ENCODE measurements at regions of chr17 and their contacts with region 1.

Region 1: DNA sequence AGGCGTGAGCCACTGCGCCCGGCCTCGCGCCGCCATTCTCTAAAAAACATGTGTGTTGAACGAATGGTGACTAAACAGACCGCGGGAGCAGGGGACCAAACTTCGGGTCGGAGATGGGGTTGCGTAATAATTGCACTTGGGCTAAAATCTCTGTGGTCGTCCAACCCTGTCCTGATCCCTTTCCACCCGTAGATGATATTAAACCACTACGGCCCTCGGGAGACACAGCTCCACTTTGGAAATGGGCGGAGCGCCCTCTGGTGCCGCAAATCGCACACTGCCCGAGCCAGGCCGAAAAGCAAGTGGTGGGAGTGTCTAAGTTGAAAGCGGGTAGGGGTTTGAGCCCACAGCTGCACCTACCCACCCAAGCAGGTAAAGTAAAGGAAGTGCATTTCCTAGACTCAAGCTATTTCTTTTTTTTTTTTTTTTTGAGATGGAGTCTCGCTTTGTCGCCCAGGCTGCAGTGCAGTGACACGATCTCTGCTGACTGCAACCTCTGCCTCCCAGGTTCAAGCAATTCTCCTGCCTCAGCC is 17.0 kb downstream of the CAVIN1 start:
- DNase-seq: peak; percentile 90
- ATAC-seq: peak; percentile 80
- H3K4me3 ChIP-seq: no peak overlapping the region
- H3K27ac ChIP-seq: peak overlapping the region; percentile 79
- H3K4me1 ChIP-seq: peaks cover 64% of the 10 kb centered on the region
- H3K27me3 ChIP-seq: no peaks in the 10 kb centered on the region
- CTCF ChIP-seq: peak; percentile 83

Region 2: DNA sequence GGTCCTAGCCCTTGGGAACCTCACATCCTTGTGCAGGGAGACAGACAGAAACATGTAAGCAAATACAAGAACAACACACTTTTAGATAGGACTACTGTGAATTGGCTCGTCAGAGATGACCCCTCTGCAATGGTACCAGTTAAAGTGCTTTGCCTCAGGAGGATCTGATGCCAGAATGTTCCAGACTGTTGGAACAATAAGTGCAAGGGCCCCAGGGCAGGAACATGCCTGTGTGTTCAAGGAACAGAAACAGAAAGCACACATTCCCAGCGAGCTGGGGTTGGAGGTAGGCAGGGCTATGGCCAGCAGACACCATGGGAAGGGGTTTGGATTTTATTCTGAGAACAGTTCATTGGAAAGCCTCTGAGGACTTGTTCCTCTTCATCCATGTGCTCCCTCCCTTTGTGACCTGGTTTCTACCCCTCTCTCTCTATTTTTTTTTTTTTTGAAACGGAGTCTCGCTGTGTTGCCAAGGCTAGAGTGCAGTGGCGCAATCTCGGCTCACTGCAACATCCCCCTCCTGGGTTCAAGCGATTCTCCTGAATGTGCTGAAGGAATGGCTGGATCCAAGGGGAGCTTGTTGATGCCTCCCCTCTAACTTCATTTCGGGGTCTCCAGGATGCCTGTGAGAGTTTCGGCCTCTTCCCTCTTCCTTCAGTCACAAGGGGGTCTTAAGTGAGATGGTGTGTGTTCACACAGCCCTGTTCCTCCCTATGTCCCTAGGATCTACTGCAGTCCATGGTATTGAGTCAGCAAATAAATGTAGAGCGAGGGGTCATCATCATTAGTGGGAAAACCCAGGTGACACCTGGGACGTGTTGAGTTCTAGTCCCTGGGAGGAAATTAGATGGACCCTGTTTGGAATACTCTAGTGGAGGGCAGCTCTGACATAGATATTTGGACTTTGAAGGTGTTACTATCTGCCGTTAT is 111.3 kb before region 1 on chr17:
- intact Hi-C with region 1: no loop called
- DNase-seq: peak; percentile 40
- ATAC-seq: peak; percentile 11
- H3K4me3 ChIP-seq: no peak overlapping the region
- H3K27ac ChIP-seq: no peak overlapping the region
- H3K4me1 ChIP-seq: peaks cover 5% of the 10 kb centered on the region
- H3K27me3 ChIP-seq: no peaks in the 10 kb centered on the region
- CTCF ChIP-seq: no peak

Region 3: GRCh38 chr17:42322382-42323267 is 83.4 kb before region 1 on chr17:
- intact Hi-C with region 1: loop called (anchors 5 kb)
- DNase-seq: peak; percentile 91
- ATAC-seq: peak; percentile 95
- H3K4me3 ChIP-seq: no peak overlapping the region
- H3K27ac ChIP-seq: no peak overlapping the region
- H3K4me1 ChIP-seq: peaks cover 11% of the 10 kb centered on the region
- H3K27me3 ChIP-seq: no peaks in the 10 kb centered on the region
- CTCF ChIP-seq: peak; percentile 99

Measured in upper lobe of right lung (tissue), 1 donor.